OCI-LY7 (cell line): ENCODE measurements at regions of chr9 and their contacts with region 1.

Region 1: GRCh38 chr9:20569525-20569924 is 52.8 kb downstream of the MLLT3 start:
- DNase-seq: no peak
- H3K4me3 ChIP-seq: no peak overlapping the region
- H3K27ac ChIP-seq: no peak overlapping the region
- H3K4me1 ChIP-seq: no peaks in the 10 kb centered on the region
- CTCF ChIP-seq: no peak

Region 2: DNA sequence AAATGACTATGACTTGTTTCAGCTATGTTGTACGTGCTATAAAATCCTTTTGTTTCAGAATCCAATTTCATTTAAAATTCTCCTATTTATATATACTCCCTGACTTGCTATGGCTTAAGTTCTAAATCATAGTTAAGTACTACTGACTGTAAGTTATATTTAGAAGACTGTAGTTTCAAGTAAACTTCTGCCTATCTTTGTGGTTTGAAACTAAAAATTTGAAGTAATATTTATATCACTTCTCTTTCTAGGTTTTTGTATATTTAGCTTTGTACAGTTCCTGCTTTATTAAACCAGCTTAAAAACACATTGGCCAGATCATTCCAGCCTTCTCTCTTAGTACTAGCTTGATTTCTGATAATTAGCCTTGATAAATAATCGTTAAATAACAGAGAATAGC is 143.5 kb before region 1 on chr9:
- CTCF ChIA-PET with region 1: no interaction called
- POLR2A ChIA-PET with region 1: no interaction called
- intact Hi-C with region 1: no loop called
- DNase-seq: no peak
- H3K4me3 ChIP-seq: no peak overlapping the region
- H3K27ac ChIP-seq: no peak overlapping the region
- H3K4me1 ChIP-seq: no peaks in the 10 kb centered on the region
- CTCF ChIP-seq: no peak

Region 3: DNA sequence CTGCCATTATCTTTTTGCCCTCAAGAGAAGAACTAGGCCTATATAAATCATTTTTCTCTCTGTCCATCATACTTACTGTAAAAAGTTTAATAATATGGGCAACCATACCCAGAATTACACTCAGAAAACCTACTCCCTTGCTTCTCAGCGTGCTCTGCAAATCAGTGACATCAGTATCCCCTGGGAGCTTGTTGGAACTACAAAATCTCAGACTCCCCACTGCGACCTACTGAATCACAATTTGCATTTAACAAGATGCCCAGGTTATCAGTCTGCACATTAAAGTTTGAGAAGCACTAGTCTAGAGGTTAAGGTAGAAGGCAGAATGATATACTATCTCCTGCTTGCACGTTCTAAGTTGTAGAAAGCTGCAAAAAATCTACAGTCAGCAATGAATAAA is 74.4 kb before region 1 on chr9:
- CTCF ChIA-PET with region 1: no interaction called
- POLR2A ChIA-PET with region 1: no interaction called
- intact Hi-C with region 1: no loop called
- DNase-seq: no peak
- H3K4me3 ChIP-seq: no peak overlapping the region
- H3K27ac ChIP-seq: no peak overlapping the region
- H3K4me1 ChIP-seq: no peaks in the 10 kb centered on the region
- CTCF ChIP-seq: no peak

Region 4: GRCh38 chr9:20604562-20604961 is 35.0 kb after region 1 on chr9:
- CTCF ChIA-PET with region 1: no interaction called
- POLR2A ChIA-PET with region 1: interaction called, 5 read pairs
- intact Hi-C with region 1: loop called (anchors 5 kb)
- DNase-seq: no peak
- H3K4me3 ChIP-seq: no peak overlapping the region
- H3K27ac ChIP-seq: no peak overlapping the region
- H3K4me1 ChIP-seq: peaks cover 9% of the 10 kb centered on the region
- CTCF ChIP-seq: no peak